ENCODE measurements at regions of chr6 and their contacts with region 1.

Region 1: GRCh38 chr6:158803733-158804143 is 15.4 kb downstream of the EZR start:
- DNase-seq: peak; percentile 65
- ATAC-seq: peak; percentile 50
- H3K4me3 ChIP-seq: peak overlapping the region; percentile 21 to 63 (median 40)
- H3K4me3 Mint-ChIP-seq: peak overlapping the region; percentile 73
- H3K27ac ChIP-seq: peak overlapping the region; percentile 80 to 88
- H3K27ac Mint-ChIP-seq: peak overlapping the region; percentile 79
- H3K4me1 ChIP-seq: peaks cover 95% of the 10 kb centered on the region in 2 donors
- H3K4me1 Mint-ChIP-seq: peaks cover 93% of the 10 kb centered on the region
- H3K27me3 ChIP-seq: no peaks in the 10 kb centered on the region
- H3K27me3 Mint-ChIP-seq: no peaks in the 10 kb centered on the region
- CTCF ChIP-seq: no peak

Region 2: GRCh38 chr6:158718461-158719046 is 85.2 kb before region 1 on chr6:
- CTCF ChIA-PET with region 1: interaction called, 5 read pairs
- POLR2A ChIA-PET with region 1: interaction called, 6 read pairs
- intact Hi-C with region 1: loop called (anchors 5 kb)
- DNase-seq: no peak
- ATAC-seq: no peak
- H3K4me3 ChIP-seq: no peak overlapping the region
- H3K4me3 Mint-ChIP-seq: peak overlapping the region; percentile 16
- H3K27ac ChIP-seq: peak overlapping the region; percentile 86 to 90
- H3K27ac Mint-ChIP-seq: peak overlapping the region; percentile 96
- H3K4me1 ChIP-seq: peaks cover 54 to 71% of the 10 kb centered on the region in 2 donors
- H3K4me1 Mint-ChIP-seq: peaks cover 64% of the 10 kb centered on the region
- H3K27me3 ChIP-seq: no peaks in the 10 kb centered on the region
- H3K27me3 Mint-ChIP-seq: no peaks in the 10 kb centered on the region
- CTCF ChIP-seq: no peak

Region 3: DNA sequence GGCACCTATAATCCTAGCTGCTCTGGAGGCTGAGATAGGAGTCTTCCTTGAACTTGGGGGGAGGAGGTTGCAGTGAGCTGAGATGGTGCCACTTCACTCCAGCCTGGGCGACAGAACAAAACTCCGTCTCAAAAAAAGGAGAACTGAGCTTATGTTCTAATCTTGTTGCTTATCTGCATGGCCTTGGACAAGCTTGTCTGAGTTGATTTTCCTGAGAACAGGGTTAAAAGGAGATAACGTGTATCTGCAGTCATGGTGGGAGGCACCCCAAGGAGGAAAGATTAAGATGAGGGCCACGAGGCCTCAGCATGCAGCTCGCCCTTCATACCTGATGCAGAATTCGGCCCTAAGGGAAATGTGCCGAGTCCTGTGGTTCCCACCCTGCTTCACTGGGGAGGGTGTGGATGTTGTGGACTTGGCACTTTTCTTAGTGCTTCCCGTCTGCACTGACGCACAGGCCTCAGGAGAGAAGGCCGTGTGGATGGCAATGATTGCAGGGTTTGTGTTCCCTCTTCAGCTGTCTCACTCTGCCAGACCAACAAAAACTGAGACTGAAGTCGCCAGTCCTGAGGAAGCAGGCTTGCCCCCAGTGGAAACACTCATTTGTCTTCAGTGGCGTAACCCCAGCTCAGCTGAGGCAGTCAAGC is 40.8 kb before region 1 on chr6:
- CTCF ChIA-PET with region 1: no interaction called
- POLR2A ChIA-PET with region 1: no interaction called
- intact Hi-C with region 1: loop called (anchors 5 kb)
- DNase-seq: peak; percentile 63
- ATAC-seq: no peak
- H3K4me3 ChIP-seq: no peak overlapping the region
- H3K4me3 Mint-ChIP-seq: no peak overlapping the region
- H3K27ac ChIP-seq: no peak overlapping the region
- H3K27ac Mint-ChIP-seq: peak overlapping the region; percentile 71
- H3K4me1 ChIP-seq: no peaks in the 10 kb centered on the region
- H3K4me1 Mint-ChIP-seq: peaks cover 2% of the 10 kb centered on the region
- H3K27me3 ChIP-seq: no peaks in the 10 kb centered on the region
- H3K27me3 Mint-ChIP-seq: no peaks in the 10 kb centered on the region
- CTCF ChIP-seq: no peak

Region 4: GRCh38 chr6:158819213-158819909 is 15.6 kb after region 1 on chr6 and contains the start of gene EZR:
- CTCF ChIA-PET with region 1: interaction called, 4 read pairs
- POLR2A ChIA-PET with region 1: interaction called, 17 read pairs
- intact Hi-C with region 1: loop called (anchors 2 kb)
- DNase-seq: peak; percentile 94
- ATAC-seq: peak; percentile 69
- H3K4me3 ChIP-seq: peak within 1 kb of the TSS; percentile 22 to 100 (median 69)
- H3K4me3 Mint-ChIP-seq: peak within 1 kb of the TSS; percentile 88
- H3K27ac ChIP-seq: peak within 1 kb of the TSS; percentile 96 to 99
- H3K27ac Mint-ChIP-seq: peak within 1 kb of the TSS; percentile 99
- H3K4me1 ChIP-seq: peaks cover 25 to 36% of the 10 kb centered on the region in 2 donors
- H3K4me1 Mint-ChIP-seq: peaks cover 36% of the 10 kb centered on the region
- H3K27me3 ChIP-seq: no peaks in the 10 kb centered on the region
- H3K27me3 Mint-ChIP-seq: no peaks in the 10 kb centered on the region
- CTCF ChIP-seq: no peak
- total RNA-seq, gene EZR: 943 and 945 TPM in 2 replicates

Region 5: GRCh38 chr6:158853072-158853871 is 49.5 kb after region 1 on chr6:
- CTCF ChIA-PET with region 1: interaction called, 5 read pairs
- POLR2A ChIA-PET with region 1: interaction called, 13 read pairs
- intact Hi-C with region 1: no loop called
- DNase-seq: peak; percentile 87
- ATAC-seq: peak; percentile 85
- H3K4me3 ChIP-seq: peak overlapping the region in 4 of 5 experiments; percentile 20 to 56 (median 48)
- H3K4me3 Mint-ChIP-seq: no peak overlapping the region
- H3K27ac ChIP-seq: peak overlapping the region; percentile 85 to 90
- H3K27ac Mint-ChIP-seq: no peak overlapping the region
- H3K4me1 ChIP-seq: peaks cover 73 to 85% of the 10 kb centered on the region in 2 donors
- H3K4me1 Mint-ChIP-seq: peaks cover 45% of the 10 kb centered on the region
- H3K27me3 ChIP-seq: no peaks in the 10 kb centered on the region
- H3K27me3 Mint-ChIP-seq: no peaks in the 10 kb centered on the region
- CTCF ChIP-seq: no peak

Region 6: DNA sequence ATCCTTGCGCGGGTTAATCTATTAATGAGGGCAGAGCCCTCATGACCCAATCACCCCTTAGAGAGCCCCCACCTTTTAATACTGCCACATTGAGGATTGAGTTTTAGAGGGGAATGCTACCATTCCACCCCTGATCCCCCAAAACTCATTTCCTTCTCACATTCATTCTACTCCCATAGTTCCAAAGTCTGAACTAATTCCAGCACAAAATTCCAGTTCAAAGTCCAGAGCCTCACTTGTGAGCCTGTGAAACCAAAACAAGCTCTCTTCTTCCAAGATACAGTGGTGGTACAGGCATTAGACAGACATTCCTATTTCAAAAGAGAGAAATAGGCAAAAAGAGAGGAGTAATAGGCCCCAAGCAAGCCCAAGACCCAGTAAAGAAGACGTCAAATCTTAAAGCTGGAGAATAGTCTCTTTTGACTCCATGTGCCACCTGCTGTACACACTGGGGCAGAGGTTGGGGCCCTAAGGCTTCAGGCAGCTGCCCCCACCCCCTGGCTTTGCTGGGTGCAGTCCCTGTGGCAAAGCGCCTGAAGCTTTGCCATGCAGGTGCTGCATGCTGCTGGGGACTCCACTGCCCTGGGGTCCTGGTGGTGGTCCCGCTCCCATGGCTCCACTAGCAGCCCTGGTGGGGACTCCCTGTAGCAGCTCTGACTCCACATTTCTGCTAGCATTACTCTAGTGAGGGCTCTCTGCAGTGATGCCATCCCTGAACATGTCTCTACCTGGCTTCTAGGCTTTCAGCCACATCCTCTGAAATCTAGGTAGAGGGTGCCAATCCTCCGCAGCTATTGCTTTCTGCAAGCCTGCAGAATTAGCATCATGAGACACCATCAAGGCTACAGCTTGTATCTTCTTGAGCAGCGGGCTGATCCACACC is 155.0 kb after region 1 on chr6:
- CTCF ChIA-PET with region 1: interaction called, 18 read pairs
- POLR2A ChIA-PET with region 1: interaction called, 7 read pairs
- intact Hi-C with region 1: loop called (anchors 5 kb)
- DNase-seq: peak; percentile 71
- ATAC-seq: peak; percentile 82
- H3K4me3 ChIP-seq: no peak overlapping the region
- H3K4me3 Mint-ChIP-seq: no peak overlapping the region
- H3K27ac ChIP-seq: no peak overlapping the region
- H3K27ac Mint-ChIP-seq: peak overlapping the region; percentile 69
- H3K4me1 ChIP-seq: peaks cover 5 to 10% of the 10 kb centered on the region in 2 donors
- H3K4me1 Mint-ChIP-seq: peaks cover 23% of the 10 kb centered on the region
- H3K27me3 ChIP-seq: no peaks in the 10 kb centered on the region
- H3K27me3 Mint-ChIP-seq: no peaks in the 10 kb centered on the region
- CTCF ChIP-seq: peak; percentile 42

Region 7: GRCh38 chr6:158987657-158988056 is 183.9 kb after region 1 on chr6:
- CTCF ChIA-PET with region 1: interaction called, 4 read pairs
- POLR2A ChIA-PET with region 1: interaction called, 15 read pairs
- intact Hi-C with region 1: no loop called
- DNase-seq: no peak
- ATAC-seq: no peak
- H3K4me3 ChIP-seq: no peak overlapping the region
- H3K4me3 Mint-ChIP-seq: no peak overlapping the region
- H3K27ac ChIP-seq: no peak overlapping the region
- H3K27ac Mint-ChIP-seq: no peak overlapping the region
- H3K4me1 ChIP-seq: no peaks in the 10 kb centered on the region
- H3K4me1 Mint-ChIP-seq: no peaks in the 10 kb centered on the region
- H3K27me3 ChIP-seq: no peaks in the 10 kb centered on the region
- H3K27me3 Mint-ChIP-seq: no peaks in the 10 kb centered on the region
- CTCF ChIP-seq: no peak

Measured in B cell (primary cell).